CD4-positive, alpha-beta memory T cell (primary cell): ENCODE measurements at regions of chr6 and their contacts with region 1.

Region 1: DNA sequence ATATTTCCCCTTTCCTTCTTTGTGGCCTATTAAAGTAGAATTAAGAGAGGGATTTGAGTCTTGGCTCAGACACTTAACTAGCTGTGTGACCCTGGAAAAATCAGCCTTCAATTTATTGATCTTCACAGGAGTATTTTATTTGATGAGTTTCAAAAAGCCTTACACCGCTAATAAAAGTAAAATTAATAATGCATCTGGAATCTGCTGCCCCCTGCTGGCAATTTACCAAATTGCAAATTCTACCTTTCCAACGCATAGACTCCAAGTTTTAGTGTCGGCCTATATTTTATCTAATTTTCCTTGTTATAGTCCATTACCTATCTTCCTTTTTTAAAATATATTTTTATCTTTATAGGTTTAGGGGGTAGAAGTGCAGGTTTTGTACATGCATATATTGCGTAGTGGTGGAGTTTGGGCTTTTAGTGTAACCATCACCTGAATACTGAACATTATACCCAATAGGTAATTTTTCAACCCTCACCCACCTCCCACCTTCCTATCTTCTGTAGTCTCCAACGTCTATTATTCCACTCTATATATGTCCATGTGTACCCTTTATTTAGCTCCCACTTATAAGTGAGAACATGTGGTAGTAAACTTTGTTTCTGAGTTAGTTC is 46.3 kb downstream of the GOPC start:
- DNase-seq: peak; percentile 41 to 58 (median 55)
- H3K4me3 ChIP-seq: no peak overlapping the region
- H3K4me3 Mint-ChIP-seq: peak overlapping the region in 1 of 8 donors; percentile 25
- H3K27ac ChIP-seq: no peak overlapping the region
- H3K27ac Mint-ChIP-seq: no peak overlapping the region
- H3K4me1 ChIP-seq: peaks cover 6% of the 10 kb centered on the region
- H3K4me1 Mint-ChIP-seq: peaks cover 1 to 5% (median 3%) of the 10 kb centered on the region in 4 donors
- H3K27me3 ChIP-seq: no peaks in the 10 kb centered on the region
- H3K27me3 Mint-ChIP-seq: no peaks in the 10 kb centered on the region

Region 2: GRCh38 chr6:115945306-115945705 is 1610.7 kb before region 1 on chr6:
- CTCF ChIA-PET with region 1: no interaction called
- POLR2A ChIA-PET with region 1: no interaction called
- intact Hi-C with region 1: no loop called
- DNase-seq: no peak
- H3K4me3 ChIP-seq: no peak overlapping the region
- H3K4me3 Mint-ChIP-seq: no peak overlapping the region
- H3K27ac ChIP-seq: no peak overlapping the region
- H3K27ac Mint-ChIP-seq: no peak overlapping the region
- H3K4me1 ChIP-seq: no peaks in the 10 kb centered on the region
- H3K4me1 Mint-ChIP-seq: no peaks in the 10 kb centered on the region
- H3K27me3 ChIP-seq: no peaks in the 10 kb centered on the region
- H3K27me3 Mint-ChIP-seq: no peaks in the 10 kb centered on the region

Region 3: DNA sequence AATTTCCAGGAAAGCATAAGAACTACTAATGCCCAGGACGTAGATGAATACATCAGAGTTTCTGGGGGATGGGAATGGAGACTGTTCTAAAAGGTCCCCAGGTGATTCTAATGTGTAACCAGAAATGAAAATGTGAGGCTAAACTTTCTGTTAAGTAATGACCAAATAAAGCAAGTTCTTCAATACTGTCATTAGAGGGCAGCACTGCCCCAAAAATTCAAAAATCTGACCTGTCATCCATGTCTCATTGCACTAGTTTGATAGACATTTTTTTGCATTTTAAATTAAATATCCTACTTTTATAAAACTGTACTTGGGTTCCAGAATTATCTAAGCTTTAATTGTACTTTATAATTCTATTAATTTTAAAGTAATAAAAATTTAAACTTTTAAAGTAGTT is 584.0 kb before region 1 on chr6:
- CTCF ChIA-PET with region 1: no interaction called
- POLR2A ChIA-PET with region 1: no interaction called
- intact Hi-C with region 1: loop called (anchors 5 kb)
- DNase-seq: peak in 2 of 5 donors; percentile 2 to 10
- H3K4me3 ChIP-seq: no peak overlapping the region
- H3K4me3 Mint-ChIP-seq: no peak overlapping the region
- H3K27ac ChIP-seq: no peak overlapping the region
- H3K27ac Mint-ChIP-seq: no peak overlapping the region
- H3K4me1 ChIP-seq: no peaks in the 10 kb centered on the region
- H3K4me1 Mint-ChIP-seq: no peaks in the 10 kb centered on the region
- H3K27me3 ChIP-seq: no peaks in the 10 kb centered on the region
- H3K27me3 Mint-ChIP-seq: peaks cover 0 to 1% of the 10 kb centered on the region in 2 donors

Region 4: GRCh38 chr6:117346142-117346930 is 209.7 kb before region 1 on chr6:
- CTCF ChIA-PET with region 1: no interaction called
- POLR2A ChIA-PET with region 1: no interaction called
- intact Hi-C with region 1: loop called (anchors 1 kb)
- DNase-seq: peak in 4 of 5 donors; percentile 22 to 31 (median 28)
- H3K4me3 ChIP-seq: no peak overlapping the region
- H3K4me3 Mint-ChIP-seq: peak overlapping the region in 1 of 8 donors; percentile 12
- H3K27ac ChIP-seq: no peak overlapping the region
- H3K27ac Mint-ChIP-seq: no peak overlapping the region
- H3K4me1 ChIP-seq: no peaks in the 10 kb centered on the region
- H3K4me1 Mint-ChIP-seq: no peaks in the 10 kb centered on the region
- H3K27me3 ChIP-seq: no peaks in the 10 kb centered on the region
- H3K27me3 Mint-ChIP-seq: peaks cover 5 to 6% of the 10 kb centered on the region in 2 donors

Region 5: DNA sequence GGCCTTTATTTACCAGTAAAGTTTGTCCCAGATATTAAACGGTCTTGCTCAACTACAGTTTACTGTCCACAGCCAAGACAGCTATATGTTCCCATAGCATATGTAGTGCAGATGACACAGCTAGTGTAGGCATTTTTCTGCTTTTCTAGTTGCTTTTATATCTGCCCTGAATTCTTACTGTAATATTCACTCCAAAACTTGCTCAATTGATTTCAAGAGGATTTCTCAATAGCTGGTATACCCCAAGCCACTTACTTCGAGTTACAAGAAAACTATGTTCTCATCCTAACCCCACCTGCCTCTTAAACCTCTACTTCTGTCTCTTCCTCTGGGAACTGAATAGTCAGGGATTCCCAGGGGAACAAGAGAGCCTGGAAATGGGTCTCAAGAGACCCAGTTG is 111.4 kb before region 1 on chr6:
- CTCF ChIA-PET with region 1: interaction called, 232 read pairs
- POLR2A ChIA-PET with region 1: no interaction called
- intact Hi-C with region 1: no loop called
- DNase-seq: no peak
- H3K4me3 ChIP-seq: no peak overlapping the region
- H3K4me3 Mint-ChIP-seq: no peak overlapping the region
- H3K27ac ChIP-seq: no peak overlapping the region
- H3K27ac Mint-ChIP-seq: peak overlapping the region in 1 of 7 donors; percentile 65
- H3K4me1 ChIP-seq: no peaks in the 10 kb centered on the region
- H3K4me1 Mint-ChIP-seq: no peaks in the 10 kb centered on the region
- H3K27me3 ChIP-seq: peaks cover 11% of the 10 kb centered on the region
- H3K27me3 Mint-ChIP-seq: peaks cover 21 to 29% of the 10 kb centered on the region in 2 donors

Region 6: DNA sequence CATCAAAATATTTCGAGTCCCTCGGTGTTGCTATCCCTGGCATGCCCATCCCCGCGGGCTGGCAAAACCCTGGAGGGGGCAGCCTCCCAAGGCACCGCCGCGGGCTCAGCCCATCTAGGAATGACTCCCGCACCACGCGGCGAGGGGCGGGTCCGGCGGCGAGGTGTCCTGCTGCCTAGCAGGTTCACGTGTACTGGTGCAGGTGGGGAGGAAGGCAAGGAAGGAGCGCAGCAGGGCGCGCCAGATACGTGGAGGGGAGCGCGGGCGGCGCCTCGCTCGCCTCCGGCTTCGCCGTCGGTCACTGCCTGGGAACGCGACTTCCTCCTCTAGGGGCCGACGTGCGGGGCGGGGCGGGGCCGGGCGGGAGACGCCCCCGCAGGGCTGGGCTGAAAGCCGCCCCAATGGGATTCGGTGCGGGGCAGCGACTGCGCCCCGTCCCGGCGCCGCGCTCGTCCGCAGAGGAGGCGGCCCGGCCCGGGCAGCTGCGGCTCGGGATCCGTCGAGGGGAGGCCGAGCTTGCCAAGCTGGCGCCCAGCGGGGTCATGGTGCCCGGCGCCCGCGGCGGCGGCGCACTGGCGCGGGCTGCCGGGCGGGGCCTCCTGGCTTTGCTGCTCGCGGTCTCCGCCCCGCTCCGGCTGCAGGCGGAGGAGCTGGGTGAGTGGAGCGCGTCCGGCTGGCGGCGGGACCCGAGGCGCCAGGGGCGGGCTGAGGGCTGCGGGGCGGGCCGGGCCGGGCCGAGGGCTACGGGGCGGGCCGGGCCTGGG is 73.6 kb before region 1 on chr6 and contains the start of gene DCBLD1:
- CTCF ChIA-PET with region 1: interaction called, 72 read pairs
- POLR2A ChIA-PET with region 1: interaction called, 75 read pairs
- intact Hi-C with region 1: loop called (anchors 1 kb)
- DNase-seq: peak; percentile 46 to 62 (median 55)
- H3K4me3 ChIP-seq: peak within 1 kb of the TSS; percentile 38 to 57
- H3K4me3 Mint-ChIP-seq: peak within 1 kb of the TSS; percentile 91 to 98 (median 94)
- H3K27ac ChIP-seq: peak within 1 kb of the TSS; percentile 36
- H3K27ac Mint-ChIP-seq: peak within 1 kb of the TSS; percentile 71 to 85 (median 79)
- H3K4me1 ChIP-seq: peaks cover 21% of the 10 kb centered on the region
- H3K4me1 Mint-ChIP-seq: peaks cover 13 to 18% (median 14%) of the 10 kb centered on the region in 4 donors
- H3K27me3 ChIP-seq: no peaks in the 10 kb centered on the region
- H3K27me3 Mint-ChIP-seq: peaks cover 5 to 15% of the 10 kb centered on the region in 2 donors
- total RNA-seq, gene DCBLD1: 8.7 to 9.7 TPM

Region 7: DNA sequence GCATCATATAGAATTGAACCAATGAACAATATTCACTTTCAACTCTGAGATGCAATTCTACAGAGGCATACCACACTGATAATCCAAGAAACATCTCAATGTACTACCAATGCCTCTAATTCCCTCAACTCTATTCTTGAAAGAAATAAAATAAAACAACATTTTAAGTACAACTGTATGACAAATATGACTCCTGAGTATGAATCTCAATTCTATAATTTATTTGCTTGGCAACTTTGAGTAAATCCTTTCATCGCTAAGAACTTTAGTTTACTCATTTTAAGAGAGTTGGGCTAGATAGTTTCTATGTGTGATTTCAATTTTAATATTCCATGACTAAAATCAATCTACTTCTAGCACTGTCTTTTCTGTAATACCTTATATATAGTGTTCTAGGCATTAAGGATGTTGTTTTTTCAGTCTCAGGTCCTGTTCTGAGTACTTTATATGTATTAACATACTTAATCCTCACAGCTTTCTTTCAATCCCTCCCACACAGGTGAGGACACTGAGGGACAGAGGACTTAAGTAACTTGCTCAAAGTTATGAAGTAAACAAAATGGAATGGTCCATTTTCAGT is 12.9 kb after region 1 on chr6:
- CTCF ChIA-PET with region 1: interaction called, 34 read pairs
- POLR2A ChIA-PET with region 1: no interaction called
- intact Hi-C with region 1: no loop called
- DNase-seq: no peak
- H3K4me3 ChIP-seq: no peak overlapping the region
- H3K4me3 Mint-ChIP-seq: no peak overlapping the region
- H3K27ac ChIP-seq: no peak overlapping the region
- H3K27ac Mint-ChIP-seq: peak overlapping the region in 1 of 7 donors; percentile 23
- H3K4me1 ChIP-seq: no peaks in the 10 kb centered on the region
- H3K4me1 Mint-ChIP-seq: peaks cover 0 to 10% (median 6%) of the 10 kb centered on the region in 4 donors
- H3K27me3 ChIP-seq: no peaks in the 10 kb centered on the region
- H3K27me3 Mint-ChIP-seq: no peaks in the 10 kb centered on the region

Region 8: GRCh38 chr6:117591405-117591804 is 35.4 kb after region 1 on chr6:
- CTCF ChIA-PET with region 1: no interaction called
- POLR2A ChIA-PET with region 1: no interaction called
- intact Hi-C with region 1: no loop called
- DNase-seq: no peak
- H3K4me3 ChIP-seq: no peak overlapping the region
- H3K4me3 Mint-ChIP-seq: no peak overlapping the region
- H3K27ac ChIP-seq: no peak overlapping the region
- H3K27ac Mint-ChIP-seq: peak overlapping the region in 3 of 7 donors; percentile 0 to 11 (median 4)
- H3K4me1 ChIP-seq: peaks cover 4% of the 10 kb centered on the region
- H3K4me1 Mint-ChIP-seq: peaks cover 7 to 31% (median 17%) of the 10 kb centered on the region in 4 donors
- H3K27me3 ChIP-seq: no peaks in the 10 kb centered on the region
- H3K27me3 Mint-ChIP-seq: no peaks in the 10 kb centered on the region